B cell (primary cell): ENCODE measurements at regions of chr15 and their contacts with region 1.

Region 1: GRCh38 chr15:65869127-65869953 is at the start of gene RAB11A:
- DNase-seq: peak; percentile 99
- ATAC-seq: peak; percentile 92
- H3K4me3 ChIP-seq: peak within 1 kb of the TSS; percentile 79 to 99 (median 89)
- H3K4me3 Mint-ChIP-seq: peak within 1 kb of the TSS; percentile 99
- H3K27ac ChIP-seq: peak within 1 kb of the TSS; percentile 95 to 96
- H3K27ac Mint-ChIP-seq: peak within 1 kb of the TSS; percentile 99
- H3K4me1 ChIP-seq: peaks cover 16 to 17% of the 10 kb centered on the region in 2 donors
- H3K4me1 Mint-ChIP-seq: peaks cover 31% of the 10 kb centered on the region
- H3K27me3 ChIP-seq: no peaks in the 10 kb centered on the region
- H3K27me3 Mint-ChIP-seq: no peaks in the 10 kb centered on the region
- CTCF ChIP-seq: peak; percentile 59
- total RNA-seq, gene RAB11A: 80.1 and 83.2 TPM in 2 replicates

Region 2: GRCh38 chr15:65516997-65517865 is 352.1 kb before region 1 on chr15 and contains the start of gene DPP8:
- CTCF ChIA-PET with region 1: interaction called, 4 read pairs
- POLR2A ChIA-PET with region 1: interaction called, 5 read pairs
- intact Hi-C with region 1: loop called (anchors 1 kb)
- DNase-seq: peak; percentile 95
- ATAC-seq: peak; percentile 94
- H3K4me3 ChIP-seq: peak within 1 kb of the TSS; percentile 87 to 99 (median 92)
- H3K4me3 Mint-ChIP-seq: peak within 1 kb of the TSS; percentile 95
- H3K27ac ChIP-seq: peak within 1 kb of the TSS; percentile 77 to 89
- H3K27ac Mint-ChIP-seq: peak within 1 kb of the TSS; percentile 89
- H3K4me1 ChIP-seq: peaks cover 14 to 15% of the 10 kb centered on the region in 2 donors
- H3K4me1 Mint-ChIP-seq: peaks cover 34% of the 10 kb centered on the region
- H3K27me3 ChIP-seq: no peaks in the 10 kb centered on the region
- H3K27me3 Mint-ChIP-seq: no peaks in the 10 kb centered on the region
- CTCF ChIP-seq: peak; percentile 90
- total RNA-seq, gene DPP8: 65.2 and 73.7 TPM in 2 replicates

Region 3: GRCh38 chr15:65638681-65639089 is 230.7 kb before region 1 on chr15:
- CTCF ChIA-PET with region 1: interaction called, 13 read pairs
- POLR2A ChIA-PET with region 1: no interaction called
- intact Hi-C with region 1: no loop called
- DNase-seq: peak; percentile 81
- ATAC-seq: peak; percentile 81
- H3K4me3 ChIP-seq: no peak overlapping the region
- H3K4me3 Mint-ChIP-seq: peak overlapping the region; percentile 0
- H3K27ac ChIP-seq: no peak overlapping the region
- H3K27ac Mint-ChIP-seq: peak overlapping the region; percentile 8
- H3K4me1 ChIP-seq: peaks cover 0 to 10% of the 10 kb centered on the region in 2 donors
- H3K4me1 Mint-ChIP-seq: peaks cover 10% of the 10 kb centered on the region
- H3K27me3 ChIP-seq: no peaks in the 10 kb centered on the region
- H3K27me3 Mint-ChIP-seq: no peaks in the 10 kb centered on the region
- CTCF ChIP-seq: peak; percentile 86

Region 4: DNA sequence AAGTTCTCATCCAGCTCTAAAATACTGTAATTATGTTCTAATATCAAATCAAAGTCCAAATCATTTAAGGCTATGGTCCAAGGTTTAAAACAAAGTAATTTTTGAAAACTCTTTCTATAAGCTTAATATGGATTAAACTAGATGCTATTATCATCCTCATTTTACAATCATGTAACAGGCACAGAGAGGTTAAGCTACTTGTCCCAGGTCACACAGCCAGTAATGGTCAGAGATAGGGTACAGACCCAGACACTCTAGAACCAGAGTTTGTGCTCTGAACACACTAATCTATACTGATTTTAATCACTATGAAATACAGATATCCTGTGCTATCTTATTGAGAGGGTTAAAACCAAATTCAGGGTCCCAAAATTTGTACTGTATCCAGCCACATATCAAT is 122.1 kb before region 1 on chr15:
- CTCF ChIA-PET with region 1: no interaction called
- POLR2A ChIA-PET with region 1: no interaction called
- intact Hi-C with region 1: no loop called
- DNase-seq: no peak
- ATAC-seq: no peak
- H3K4me3 ChIP-seq: no peak overlapping the region
- H3K4me3 Mint-ChIP-seq: no peak overlapping the region
- H3K27ac ChIP-seq: no peak overlapping the region
- H3K27ac Mint-ChIP-seq: no peak overlapping the region
- H3K4me1 ChIP-seq: no peaks in the 10 kb centered on the region
- H3K4me1 Mint-ChIP-seq: peaks cover 15% of the 10 kb centered on the region
- H3K27me3 ChIP-seq: no peaks in the 10 kb centered on the region
- H3K27me3 Mint-ChIP-seq: no peaks in the 10 kb centered on the region
- CTCF ChIP-seq: no peak

Region 5: DNA sequence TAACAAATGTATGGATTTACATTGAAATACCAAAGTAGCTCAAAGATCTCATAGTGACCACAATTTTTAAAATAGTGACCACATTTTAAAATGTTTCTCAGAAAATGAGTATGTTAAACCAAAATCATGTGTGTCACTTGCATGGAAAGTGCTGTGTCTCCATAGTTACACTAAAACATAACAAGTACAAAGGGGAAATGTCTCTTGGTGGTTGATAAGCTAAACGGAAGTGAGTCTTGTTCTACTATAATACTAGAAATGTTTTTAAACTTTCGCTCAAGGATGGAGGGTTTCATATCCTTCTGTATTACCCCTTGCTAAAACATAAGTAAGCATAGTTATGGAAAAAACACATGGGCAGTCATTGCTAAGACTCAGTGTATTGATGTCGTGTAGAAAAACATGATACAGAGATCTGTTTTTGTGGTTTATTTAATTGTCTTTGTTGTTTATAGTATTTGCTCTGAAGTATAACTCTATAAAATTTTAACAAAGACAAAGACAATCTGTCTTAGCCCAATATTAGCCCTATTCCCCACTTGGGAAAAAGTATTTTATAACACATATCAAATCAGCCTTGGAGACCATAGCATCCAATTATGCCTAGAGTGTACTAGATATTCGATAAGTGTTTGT is 50.3 kb before region 1 on chr15:
- CTCF ChIA-PET with region 1: no interaction called
- POLR2A ChIA-PET with region 1: no interaction called
- intact Hi-C with region 1: loop called (anchors 2 kb)
- DNase-seq: peak; percentile 91
- ATAC-seq: peak; percentile 78
- H3K4me3 ChIP-seq: peak overlapping the region in 2 of 5 experiments; percentile 21 to 40
- H3K4me3 Mint-ChIP-seq: peak overlapping the region; percentile 70
- H3K27ac ChIP-seq: peak overlapping the region; percentile 91 to 94
- H3K27ac Mint-ChIP-seq: peak overlapping the region; percentile 96
- H3K4me1 ChIP-seq: peaks cover 66 to 77% of the 10 kb centered on the region in 2 donors
- H3K4me1 Mint-ChIP-seq: peaks cover 74% of the 10 kb centered on the region
- H3K27me3 ChIP-seq: no peaks in the 10 kb centered on the region
- H3K27me3 Mint-ChIP-seq: no peaks in the 10 kb centered on the region
- CTCF ChIP-seq: no peak

Region 6: GRCh38 chr15:65884511-65884910 is 15.2 kb after region 1 on chr15:
- CTCF ChIA-PET with region 1: no interaction called
- POLR2A ChIA-PET with region 1: interaction called, 3 read pairs
- intact Hi-C with region 1: loop called (anchors 1 kb)
- DNase-seq: peak; percentile 70
- ATAC-seq: peak; percentile 66
- H3K4me3 ChIP-seq: peak overlapping the region in 1 of 5 experiments; percentile 1
- H3K4me3 Mint-ChIP-seq: no peak overlapping the region
- H3K27ac ChIP-seq: peak overlapping the region; percentile 38 to 59
- H3K27ac Mint-ChIP-seq: peak overlapping the region; percentile 76
- H3K4me1 ChIP-seq: peaks cover 41 to 42% of the 10 kb centered on the region in 2 donors
- H3K4me1 Mint-ChIP-seq: peaks cover 50% of the 10 kb centered on the region
- H3K27me3 ChIP-seq: no peaks in the 10 kb centered on the region
- H3K27me3 Mint-ChIP-seq: no peaks in the 10 kb centered on the region
- CTCF ChIP-seq: no peak

Region 7: GRCh38 chr15:65980824-65981456 is 111.6 kb after region 1 on chr15:
- CTCF ChIA-PET with region 1: interaction called, 7 read pairs
- POLR2A ChIA-PET with region 1: interaction called, 4 read pairs
- intact Hi-C with region 1: loop called (anchors 1 kb)
- DNase-seq: peak; percentile 21
- ATAC-seq: no peak
- H3K4me3 ChIP-seq: no peak overlapping the region
- H3K4me3 Mint-ChIP-seq: peak overlapping the region; percentile 83
- H3K27ac ChIP-seq: no peak overlapping the region
- H3K27ac Mint-ChIP-seq: no peak overlapping the region
- H3K4me1 ChIP-seq: peaks cover 6 to 15% of the 10 kb centered on the region in 2 donors
- H3K4me1 Mint-ChIP-seq: peaks cover 13% of the 10 kb centered on the region
- H3K27me3 ChIP-seq: peaks cover 0 to 27% (median 10%) of the 10 kb centered on the region in 4 experiments
- H3K27me3 Mint-ChIP-seq: peaks cover 21% of the 10 kb centered on the region
- CTCF ChIP-seq: peak; percentile 34